Transverse colon (tissue), 4 donors: ENCODE measurements at regions of chr10 and their contacts with region 1.

Region 1: GRCh38 chr10:72048450-72049124 is 39.8 kb downstream of the SPOCK2 start:
- DNase-seq: peak; percentile 94
- H3K4me3 ChIP-seq: no peak overlapping the region
- H3K27ac ChIP-seq: no peak overlapping the region
- H3K4me1 ChIP-seq: peaks cover 0 to 2% (median 1%) of the 10 kb centered on the region in 4 donors
- H3K27me3 ChIP-seq: no peaks in the 10 kb centered on the region
- CTCF ChIP-seq: peak; percentile 98 to 100 (median 99)
- EP300 ChIP-seq: no peak
- POLR2A ChIP-seq: no peak

Region 2: GRCh38 chr10:70887804-70888800 is 1160.5 kb before region 1 on chr10 and contains the start of gene PCBD1:
- in situ Hi-C with region 1: no loop called
- intact Hi-C with region 1: no loop called
- DNase-seq: peak; percentile 86
- H3K4me3 ChIP-seq: peak within 1 kb of the TSS; percentile 73 to 87 (median 76)
- H3K27ac ChIP-seq: peak within 1 kb of the TSS; percentile 89 to 97 (median 94)
- H3K4me1 ChIP-seq: peaks cover 0 to 20% (median 16%) of the 10 kb centered on the region in 4 donors
- H3K27me3 ChIP-seq: no peaks in the 10 kb centered on the region
- CTCF ChIP-seq: no peak
- EP300 ChIP-seq: no peak
- POLR2A ChIP-seq: peak; percentile 40
- total RNA-seq, gene PCBD1: 21.7 to 69.6 (median 44.8) TPM

Region 3: GRCh38 chr10:71893920-71894319 is 154.7 kb before region 1 on chr10:
- in situ Hi-C with region 1: no loop called
- intact Hi-C with region 1: loop called (anchors 10 kb)
- DNase-seq: no peak
- H3K4me3 ChIP-seq: no peak overlapping the region
- H3K27ac ChIP-seq: no peak overlapping the region
- H3K4me1 ChIP-seq: peaks cover 0 to 14% (median 9%) of the 10 kb centered on the region in 4 donors
- H3K27me3 ChIP-seq: peaks cover 3% of the 10 kb centered on the region
- CTCF ChIP-seq: no peak
- EP300 ChIP-seq: no peak
- POLR2A ChIP-seq: no peak

Region 4: DNA sequence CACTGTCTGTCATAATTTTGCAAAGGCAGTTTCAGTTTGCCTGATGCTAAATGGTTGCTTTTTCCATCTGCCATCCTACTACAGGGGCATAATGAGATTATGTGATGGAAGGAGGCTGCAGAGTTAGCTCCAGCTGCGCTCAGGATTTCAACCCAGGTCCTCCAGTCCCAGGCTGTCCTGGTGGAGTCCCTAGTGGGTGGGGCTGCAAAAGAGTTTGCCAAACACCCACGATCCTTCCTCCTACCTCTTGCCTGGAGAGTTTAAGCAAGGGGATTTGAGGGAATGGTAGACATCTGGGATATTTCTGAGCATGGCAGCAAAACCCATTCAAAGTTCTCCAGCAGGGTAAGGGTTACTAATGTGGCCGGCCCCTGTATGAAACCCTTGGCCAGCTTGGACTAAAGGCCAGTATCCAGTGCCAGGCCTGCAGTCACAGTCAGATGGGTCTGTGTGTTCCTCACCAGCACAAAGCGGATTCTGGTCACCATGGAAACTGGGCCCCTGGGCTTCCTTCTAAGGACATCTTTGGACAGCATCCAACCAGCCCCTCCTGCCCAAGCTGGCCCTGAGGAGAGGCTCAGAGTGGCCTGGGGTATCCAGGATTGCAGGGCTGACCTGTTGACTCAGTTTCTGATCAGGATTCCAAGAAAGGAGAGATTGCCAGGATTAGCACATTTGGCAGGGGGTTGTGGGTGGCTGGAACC is 127.1 kb before region 1 on chr10:
- in situ Hi-C with region 1: loop called in 1 of 4 experiments (anchors 25 kb)
- intact Hi-C with region 1: no loop called
- DNase-seq: peak; percentile 37
- H3K4me3 ChIP-seq: no peak overlapping the region
- H3K27ac ChIP-seq: peak overlapping the region; percentile 73 to 79 (median 78)
- H3K4me1 ChIP-seq: peaks cover 2 to 28% (median 19%) of the 10 kb centered on the region in 4 donors
- H3K27me3 ChIP-seq: no peaks in the 10 kb centered on the region
- CTCF ChIP-seq: no peak
- EP300 ChIP-seq: no peak
- POLR2A ChIP-seq: no peak

Region 5: DNA sequence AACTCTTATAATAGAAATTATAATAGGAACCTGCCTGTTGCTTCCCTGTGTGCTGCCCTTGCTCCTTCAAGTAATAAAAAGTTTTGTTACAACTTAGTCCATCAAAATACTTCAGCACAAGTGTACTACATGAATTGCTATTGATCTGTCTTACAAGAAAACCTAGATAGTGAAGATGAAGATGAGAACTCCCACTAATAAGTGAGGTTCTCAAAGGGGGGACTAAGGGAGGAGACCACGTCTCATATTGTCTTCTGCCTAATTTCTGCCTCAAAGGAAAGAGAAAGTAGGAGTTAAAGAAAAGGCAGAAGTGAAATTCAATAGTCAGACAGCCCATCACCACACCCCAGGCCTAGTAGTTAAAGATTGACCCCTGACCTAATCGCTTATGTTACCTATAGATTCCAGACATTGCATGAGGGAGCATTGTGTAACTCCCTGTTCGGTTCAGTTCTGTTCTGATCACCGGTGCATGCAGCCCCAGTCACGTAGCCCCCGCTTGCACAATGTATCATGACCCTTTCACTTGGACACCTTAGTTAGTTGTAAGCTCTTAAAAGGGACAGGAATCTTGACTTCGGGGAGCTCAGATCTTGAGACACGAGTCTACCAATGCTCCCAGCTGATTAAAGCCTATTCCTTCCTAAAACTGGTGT is 102.6 kb before region 1 on chr10:
- in situ Hi-C with region 1: loop called in 2 of 4 experiments (anchors 5 to 10 kb)
- intact Hi-C with region 1: no loop called
- DNase-seq: no peak
- H3K4me3 ChIP-seq: no peak overlapping the region
- H3K27ac ChIP-seq: no peak overlapping the region
- H3K4me1 ChIP-seq: no peaks in the 10 kb centered on the region
- H3K27me3 ChIP-seq: no peaks in the 10 kb centered on the region
- CTCF ChIP-seq: no peak
- EP300 ChIP-seq: no peak
- POLR2A ChIP-seq: no peak

Region 6: DNA sequence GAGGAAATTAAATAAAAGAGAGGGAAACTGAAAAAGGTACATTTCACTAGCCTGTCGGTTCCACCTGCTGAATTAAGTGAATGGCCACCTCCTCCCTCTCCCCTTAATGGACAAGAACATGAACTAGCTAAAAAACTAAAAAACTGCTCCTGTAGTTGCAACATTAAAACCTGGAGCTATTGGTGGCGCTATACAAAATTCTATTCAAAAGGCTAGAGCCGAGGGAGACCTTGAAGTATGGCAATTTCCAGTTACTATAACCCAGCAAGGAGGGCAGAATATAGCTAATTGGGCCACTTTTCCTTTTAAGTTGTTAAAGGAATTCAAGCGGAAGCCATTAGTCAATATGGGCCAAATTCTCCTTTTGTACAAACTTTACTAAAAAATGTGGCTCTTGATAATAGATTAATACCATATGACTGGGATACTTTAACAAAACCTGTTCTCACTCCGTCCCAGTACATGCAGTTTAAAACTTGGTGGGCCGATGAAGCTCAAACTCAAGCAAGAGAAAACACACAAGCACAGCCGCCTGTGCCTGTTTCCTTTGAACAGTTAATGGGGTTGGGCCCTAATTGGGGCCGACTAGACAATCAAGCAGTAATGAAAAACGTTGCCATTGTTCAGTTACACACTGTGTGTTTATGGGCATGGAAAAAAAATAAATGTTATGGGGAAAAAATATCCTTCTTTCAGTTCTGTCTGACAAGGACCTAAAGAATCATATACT is 90.9 kb before region 1 on chr10:
- in situ Hi-C with region 1: loop called in 2 of 4 experiments (anchors 5 to 10 kb)
- intact Hi-C with region 1: loop called (anchors 1 kb)
- DNase-seq: no peak
- H3K4me3 ChIP-seq: no peak overlapping the region
- H3K27ac ChIP-seq: no peak overlapping the region
- H3K4me1 ChIP-seq: peaks cover 0 to 5% (median 2%) of the 10 kb centered on the region in 4 donors
- H3K27me3 ChIP-seq: no peaks in the 10 kb centered on the region
- CTCF ChIP-seq: no peak
- EP300 ChIP-seq: no peak
- POLR2A ChIP-seq: no peak

Region 7: GRCh38 chr10:72340510-72341261 is 292.1 kb after region 1 on chr10:
- in situ Hi-C with region 1: loop called in 3 of 4 experiments (anchors 10 to 25 kb)
- intact Hi-C with region 1: no loop called
- DNase-seq: peak; percentile 77
- H3K4me3 ChIP-seq: no peak overlapping the region
- H3K27ac ChIP-seq: no peak overlapping the region
- H3K4me1 ChIP-seq: peaks cover 10 to 22% (median 13%) of the 10 kb centered on the region in 4 donors
- H3K27me3 ChIP-seq: no peaks in the 10 kb centered on the region
- CTCF ChIP-seq: peak; percentile 92 to 97 (median 95)
- EP300 ChIP-seq: no peak
- POLR2A ChIP-seq: no peak